ENCODE measurements at regions of chr17 and their contacts with region 1.

Region 1: DNA sequence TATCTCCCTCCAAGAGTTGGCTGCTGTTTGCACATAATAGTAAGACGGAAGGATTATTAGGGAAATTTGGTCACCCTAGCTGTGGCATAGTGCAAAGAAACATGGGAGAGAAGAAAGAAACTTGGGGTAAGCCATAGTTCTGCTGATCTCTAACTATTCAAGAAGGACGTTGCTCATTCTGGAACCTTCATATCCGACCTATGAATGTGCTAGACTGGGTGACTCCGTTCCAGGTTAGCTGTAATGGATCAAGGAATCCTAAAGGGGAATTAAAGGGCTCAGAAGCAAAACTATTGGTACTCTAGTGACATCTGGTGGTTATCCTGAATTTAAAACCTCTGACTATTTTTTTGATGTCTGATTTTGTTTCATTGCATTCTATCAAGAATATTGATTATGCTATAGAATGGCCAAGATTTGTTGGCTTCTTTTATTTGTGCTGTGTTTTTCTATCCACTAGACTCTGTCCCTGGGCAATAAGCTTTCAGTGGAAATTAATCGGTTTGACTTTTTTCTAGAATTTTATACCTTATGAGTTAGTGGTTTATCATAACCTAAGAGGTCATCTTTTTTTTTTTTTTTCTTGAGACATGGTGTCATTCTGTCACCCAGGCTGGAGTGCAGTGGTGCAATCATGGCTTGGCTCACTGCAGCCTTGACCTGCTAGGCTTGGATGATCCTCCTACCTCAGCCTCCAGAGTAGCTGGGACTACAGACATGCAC is 19.5 kb downstream of the PCTP start:
- DNase-seq: peak; percentile 72
- ATAC-seq: peak; percentile 63
- H3K4me3 ChIP-seq: no peak overlapping the region
- H3K27ac ChIP-seq: no peak overlapping the region
- H3K4me1 ChIP-seq: peaks cover 8% of the 10 kb centered on the region
- H3K27me3 ChIP-seq: no peaks in the 10 kb centered on the region
- CTCF ChIP-seq: peak; percentile 69
- POLR2A ChIP-seq: no peak
- RAD21 ChIP-seq: peak; percentile 73

Region 2: GRCh38 chr17:55641676-55642081 is 128.6 kb before region 1 on chr17:
- CTCF ChIA-PET with region 1: interaction called, 7 read pairs
- POLR2A ChIA-PET with region 1: no interaction called
- dilution Hi-C with region 1: no loop called
- in situ Hi-C with region 1: no loop called
- intact Hi-C with region 1: loop called (anchors 1 kb)
- DNase-seq: peak; percentile 63
- ATAC-seq: peak; percentile 94
- H3K4me3 ChIP-seq: no peak overlapping the region
- H3K27ac ChIP-seq: no peak overlapping the region
- H3K4me1 ChIP-seq: no peaks in the 10 kb centered on the region
- H3K27me3 ChIP-seq: peaks cover 4% of the 10 kb centered on the region
- CTCF ChIP-seq: peak; percentile 54
- POLR2A ChIP-seq: no peak
- RAD21 ChIP-seq: peak; percentile 46

Region 3: GRCh38 chr17:55717898-55718735 is 52.2 kb before region 1 on chr17:
- CTCF ChIA-PET with region 1: interaction called, 4 read pairs
- POLR2A ChIA-PET with region 1: no interaction called
- dilution Hi-C with region 1: no loop called
- in situ Hi-C with region 1: no loop called
- intact Hi-C with region 1: loop called (anchors 1 kb)
- DNase-seq: peak; percentile 68
- ATAC-seq: peak; percentile 77
- H3K4me3 ChIP-seq: no peak overlapping the region
- H3K27ac ChIP-seq: no peak overlapping the region
- H3K4me1 ChIP-seq: peaks cover 2% of the 10 kb centered on the region
- H3K27me3 ChIP-seq: peaks cover 5% of the 10 kb centered on the region; the same call in 1 of the 2 replicates
- CTCF ChIP-seq: peak; percentile 75
- POLR2A ChIP-seq: no peak
- RAD21 ChIP-seq: peak; percentile 55

Region 4: DNA sequence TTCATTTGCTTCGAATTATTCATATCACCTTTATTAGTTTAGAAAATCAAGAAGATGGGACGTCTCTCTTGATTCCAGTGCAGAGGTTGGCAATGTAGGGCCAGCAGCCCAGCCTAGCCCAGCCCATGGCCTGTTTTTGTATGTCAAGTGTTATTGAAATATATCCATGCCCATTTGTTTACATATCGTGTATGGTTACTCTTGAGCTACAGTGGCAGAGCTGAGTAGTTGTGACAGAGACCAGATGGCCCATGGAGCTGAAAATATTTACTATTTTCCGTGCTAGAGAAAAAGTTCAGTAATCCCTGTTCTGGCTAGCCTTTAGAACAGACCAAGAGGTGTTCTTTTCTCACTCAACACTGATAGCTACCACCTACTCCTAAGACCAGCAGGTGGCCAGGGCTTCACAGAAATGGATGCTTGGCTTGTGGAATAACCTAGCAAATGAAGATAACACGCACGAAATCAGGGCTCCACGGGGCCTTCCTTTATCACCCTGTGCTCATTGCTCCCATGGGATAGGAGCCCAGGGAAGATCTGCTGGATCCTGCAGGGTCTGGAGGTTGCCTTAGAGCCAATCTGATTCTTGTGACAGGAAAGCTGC is 259.8 kb after region 1 on chr17:
- CTCF ChIA-PET with region 1: no interaction called
- POLR2A ChIA-PET with region 1: no interaction called
- dilution Hi-C with region 1: no loop called
- in situ Hi-C with region 1: no loop called
- intact Hi-C with region 1: no loop called
- DNase-seq: no peak
- ATAC-seq: no peak
- H3K4me3 ChIP-seq: no peak overlapping the region
- H3K27ac ChIP-seq: no peak overlapping the region
- H3K4me1 ChIP-seq: no peaks in the 10 kb centered on the region
- H3K27me3 ChIP-seq: no peaks in the 10 kb centered on the region
- CTCF ChIP-seq: no peak
- POLR2A ChIP-seq: no peak
- RAD21 ChIP-seq: no peak

Region 5: GRCh38 chr17:56085588-56086267 is 315.4 kb after region 1 on chr17:
- CTCF ChIA-PET with region 1: no interaction called
- POLR2A ChIA-PET with region 1: no interaction called
- dilution Hi-C with region 1: no loop called
- in situ Hi-C with region 1: no loop called
- intact Hi-C with region 1: no loop called
- DNase-seq: no peak
- ATAC-seq: no peak
- H3K4me3 ChIP-seq: no peak overlapping the region
- H3K27ac ChIP-seq: no peak overlapping the region
- H3K4me1 ChIP-seq: no peaks in the 10 kb centered on the region
- H3K27me3 ChIP-seq: no peaks in the 10 kb centered on the region; the same call in 1 of the 2 replicates
- CTCF ChIP-seq: no peak
- POLR2A ChIP-seq: no peak
- RAD21 ChIP-seq: no peak